MCF 10A (cell line): ENCODE measurements at regions of chr19 and their contacts with region 1.

Region 1: DNA sequence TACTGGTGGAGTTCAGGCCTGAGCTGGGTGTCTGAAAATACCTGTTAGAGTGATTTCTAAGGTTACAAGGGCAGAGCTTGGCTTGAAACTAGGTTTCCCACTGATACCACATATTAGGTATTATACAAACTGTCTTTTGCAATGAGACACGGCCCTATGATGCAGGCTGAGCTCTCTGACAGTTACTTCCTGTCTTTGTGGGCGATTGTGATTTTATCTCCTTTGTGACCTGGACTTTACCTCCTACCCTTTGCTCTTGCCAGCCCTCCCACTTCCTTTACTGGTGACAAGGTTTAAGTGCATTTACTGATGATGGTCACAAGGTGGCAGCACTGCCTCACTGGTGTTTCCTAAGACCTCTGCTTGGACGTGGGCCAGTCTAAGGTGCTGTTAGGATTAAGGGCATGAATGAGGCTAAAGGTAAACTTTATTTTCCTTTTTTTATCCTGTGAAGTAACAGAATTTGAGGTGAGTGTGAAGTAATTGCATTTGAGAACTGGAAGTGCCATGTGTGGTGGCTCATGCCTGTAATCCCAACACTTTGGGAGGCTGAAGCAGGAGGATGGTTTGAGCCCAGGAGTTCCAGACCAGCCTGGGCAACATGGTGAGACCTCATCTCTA is 7.7 kb upstream of the CXCL17 start:
- DNase-seq: peak; percentile 94
- H3K4me3 Mint-ChIP-seq: no peak overlapping the region
- H3K27ac Mint-ChIP-seq: no peak overlapping the region
- H3K4me1 Mint-ChIP-seq: peaks cover under 1% of the 10 kb centered on the region
- H3K27me3 Mint-ChIP-seq: peaks cover 14% of the 10 kb centered on the region
- CTCF ChIP-seq: peak; percentile 90

Region 2: GRCh38 chr19:42468273-42468796 is 17.9 kb after region 1 on chr19:
- CTCF ChIA-PET with region 1: interaction called, 35 read pairs
- POLR2A ChIA-PET with region 1: no interaction called
- intact Hi-C with region 1: no loop called
- DNase-seq: peak; percentile 70
- H3K4me3 Mint-ChIP-seq: no peak overlapping the region
- H3K27ac Mint-ChIP-seq: no peak overlapping the region
- H3K4me1 Mint-ChIP-seq: peaks cover 5% of the 10 kb centered on the region
- H3K27me3 Mint-ChIP-seq: peaks cover 10% of the 10 kb centered on the region
- CTCF ChIP-seq: no peak

Region 3: GRCh38 chr19:42529248-42529764 is 78.9 kb after region 1 on chr19:
- CTCF ChIA-PET with region 1: interaction called, 62 read pairs
- POLR2A ChIA-PET with region 1: no interaction called
- intact Hi-C with region 1: loop called (anchors 1 kb)
- DNase-seq: peak; percentile 70
- H3K4me3 Mint-ChIP-seq: no peak overlapping the region
- H3K27ac Mint-ChIP-seq: no peak overlapping the region
- H3K4me1 Mint-ChIP-seq: peaks cover 13% of the 10 kb centered on the region
- H3K27me3 Mint-ChIP-seq: no peaks in the 10 kb centered on the region
- CTCF ChIP-seq: peak; percentile 80

Region 4: DNA sequence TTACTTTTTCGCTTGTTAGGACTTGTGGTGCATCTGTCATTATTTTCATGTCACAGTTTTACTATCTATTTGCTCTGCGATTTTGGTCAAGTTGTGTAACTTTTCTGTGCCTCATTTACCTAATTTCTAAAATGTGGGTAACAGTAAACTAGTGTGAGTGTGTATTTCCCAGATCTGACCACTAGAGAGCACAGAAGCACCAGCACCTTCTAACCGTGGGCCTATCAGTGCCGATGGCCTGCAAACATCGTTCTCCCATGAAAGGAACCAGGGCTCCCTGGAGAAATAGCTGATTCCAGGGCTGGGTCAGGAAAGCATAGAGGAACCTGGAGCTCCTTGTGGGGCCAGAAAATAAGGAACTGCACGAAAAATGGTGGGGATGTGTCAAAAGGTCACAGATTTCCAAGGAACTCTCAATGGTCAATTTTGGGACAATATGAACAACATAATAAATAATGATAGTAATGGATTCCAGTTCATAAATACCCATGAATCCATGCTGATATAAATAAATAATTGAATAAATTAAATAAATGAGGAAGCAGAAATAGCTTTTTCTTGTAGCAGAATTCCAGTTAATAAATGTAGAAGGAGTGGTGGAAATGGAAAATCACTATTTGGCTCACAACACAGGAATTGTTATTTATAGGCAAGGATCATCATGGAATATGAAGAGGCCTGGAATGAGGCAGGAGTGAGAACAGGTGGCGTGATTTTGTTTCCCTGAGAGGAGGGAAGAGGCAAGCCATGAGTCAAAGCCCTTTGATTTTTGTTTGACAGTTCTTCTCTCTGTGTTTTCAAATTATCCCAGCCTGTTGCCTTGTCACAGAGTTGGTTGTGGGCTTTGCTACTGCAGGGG is 113.2 kb after region 1 on chr19:
- CTCF ChIA-PET with region 1: interaction called, 12 read pairs
- POLR2A ChIA-PET with region 1: interaction called, 3 read pairs
- intact Hi-C with region 1: no loop called
- DNase-seq: peak; percentile 60
- H3K4me3 Mint-ChIP-seq: no peak overlapping the region
- H3K27ac Mint-ChIP-seq: no peak overlapping the region
- H3K4me1 Mint-ChIP-seq: peaks cover 10% of the 10 kb centered on the region
- H3K27me3 Mint-ChIP-seq: peaks cover 24% of the 10 kb centered on the region
- CTCF ChIP-seq: peak; percentile 56